ENCODE measurements at regions of chr1 and their contacts with region 1.

Region 1: GRCh38 chr1:15400627-15401026 is 9.1 kb upstream of the EFHD2 start:
- DNase-seq: peak; percentile 95
- H3K4me3 Mint-ChIP-seq: no peak overlapping the region
- H3K27ac Mint-ChIP-seq: no peak overlapping the region
- H3K4me1 Mint-ChIP-seq: peaks cover 14% of the 10 kb centered on the region
- H3K27me3 Mint-ChIP-seq: no peaks in the 10 kb centered on the region
- CTCF ChIP-seq: no peak

Region 2: GRCh38 chr1:15355968-15356621 is 44.5 kb before region 1 on chr1:
- CTCF ChIA-PET with region 1: interaction called, 4 read pairs
- POLR2A ChIA-PET with region 1: interaction called, 14 read pairs
- intact Hi-C with region 1: no loop called
- DNase-seq: peak; percentile 86
- H3K4me3 Mint-ChIP-seq: peak overlapping the region; percentile 40
- H3K27ac Mint-ChIP-seq: peak overlapping the region; percentile 86
- H3K4me1 Mint-ChIP-seq: peaks cover 49% of the 10 kb centered on the region
- H3K27me3 Mint-ChIP-seq: no peaks in the 10 kb centered on the region
- CTCF ChIP-seq: no peak

Region 3: GRCh38 chr1:15417365-15417934 is 16.8 kb after region 1 on chr1:
- CTCF ChIA-PET with region 1: interaction called, 3 read pairs
- POLR2A ChIA-PET with region 1: interaction called, 52 read pairs
- intact Hi-C with region 1: no loop called
- DNase-seq: peak; percentile 91
- H3K4me3 Mint-ChIP-seq: peak overlapping the region; percentile 47
- H3K27ac Mint-ChIP-seq: peak overlapping the region; percentile 79
- H3K4me1 Mint-ChIP-seq: peaks cover 34% of the 10 kb centered on the region
- H3K27me3 Mint-ChIP-seq: no peaks in the 10 kb centered on the region
- CTCF ChIP-seq: no peak

Region 4: DNA sequence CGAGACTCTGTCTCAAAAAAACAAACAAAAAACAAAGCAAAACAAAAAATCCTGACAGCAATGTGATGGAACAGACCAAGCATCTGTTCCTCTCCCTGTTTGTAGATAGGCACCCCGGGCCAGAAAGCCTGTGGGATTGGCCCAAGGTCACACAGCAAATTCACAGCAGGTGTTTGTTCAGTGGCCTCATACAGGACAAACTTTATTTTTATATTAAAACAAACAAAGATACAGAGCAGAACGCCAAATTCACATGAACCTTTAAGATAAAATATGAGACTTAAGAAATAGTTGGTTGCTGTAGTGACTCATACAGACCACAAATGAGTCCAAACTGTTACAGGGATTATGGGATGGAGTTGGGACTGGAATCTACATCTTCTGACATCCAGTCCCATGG is 53.6 kb after region 1 on chr1:
- CTCF ChIA-PET with region 1: no interaction called
- POLR2A ChIA-PET with region 1: no interaction called
- intact Hi-C with region 1: no loop called
- DNase-seq: peak; percentile 66
- H3K4me3 Mint-ChIP-seq: no peak overlapping the region
- H3K27ac Mint-ChIP-seq: no peak overlapping the region
- H3K4me1 Mint-ChIP-seq: peaks cover 5% of the 10 kb centered on the region
- H3K27me3 Mint-ChIP-seq: no peaks in the 10 kb centered on the region
- CTCF ChIP-seq: no peak

Measured in MCF 10A (cell line).